Psoas muscle (tissue), 8 donors: ENCODE measurements at regions of chr4 and their contacts with region 1.

Region 1: DNA sequence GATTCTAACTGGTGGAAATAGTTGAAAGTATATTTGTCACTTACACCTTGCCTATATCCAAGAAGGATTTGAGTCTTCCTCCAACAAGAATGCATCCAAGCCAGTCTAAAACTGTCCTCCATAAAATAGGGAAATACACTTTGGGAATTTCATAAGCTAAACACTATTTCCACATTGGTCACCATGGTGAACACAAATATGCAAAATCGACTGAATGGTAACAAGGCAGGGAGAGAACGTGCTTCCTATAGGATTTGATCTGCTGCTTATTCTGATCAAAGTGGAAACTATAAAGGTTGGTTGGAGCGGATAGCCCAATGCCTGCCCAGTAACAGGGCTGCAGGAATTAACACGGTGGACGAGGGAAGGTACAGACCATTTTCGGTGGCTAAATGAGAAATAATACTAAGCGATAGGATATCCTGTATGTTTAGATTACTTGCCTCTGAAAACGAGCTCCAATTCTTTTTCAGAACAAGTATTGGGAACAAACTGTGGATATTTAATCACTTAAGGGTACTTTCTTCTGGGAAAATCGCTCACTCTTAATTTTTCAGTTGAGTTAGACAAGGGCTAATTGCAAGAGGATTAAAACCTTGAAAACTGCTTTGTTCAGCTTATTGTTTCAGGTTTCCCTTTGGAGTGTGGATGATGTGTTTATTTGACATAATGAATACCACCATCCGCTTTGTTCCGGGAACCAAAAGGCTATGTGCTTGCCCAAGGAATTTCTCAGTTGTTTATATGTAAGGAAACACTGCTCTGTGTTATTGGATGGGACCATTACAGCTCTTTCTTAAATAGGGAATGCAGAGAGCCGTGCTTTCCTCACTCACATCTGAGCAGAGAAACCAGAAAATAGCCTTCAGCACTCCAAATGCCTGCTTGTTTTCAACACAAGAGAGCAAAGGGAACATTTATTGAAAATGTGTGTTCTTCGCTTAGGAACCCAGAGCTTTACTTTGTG is 194.4 kb downstream of the CBR4 start:
- DNase-seq: no peak
- ATAC-seq: peak in 3 of 4 donors; percentile 29 to 34 (median 31)
- H3K4me3 ChIP-seq: peak overlapping the region; percentile 24
- H3K27ac ChIP-seq: peak overlapping the region; percentile 68
- H3K4me1 ChIP-seq: peaks cover 41% of the 10 kb centered on the region
- H3K27me3 ChIP-seq: no peaks in the 10 kb centered on the region
- CTCF ChIP-seq: no peak

Region 2: GRCh38 chr4:168831919-168832762 is 16.5 kb after region 1 on chr4:
- intact Hi-C with region 1: loop called in 1 of 2 experiments (anchors 2 kb)
- DNase-seq: peak; percentile 83 to 88
- ATAC-seq: peak; percentile 92 to 96 (median 94)
- H3K4me3 ChIP-seq: peak overlapping the region; percentile 73
- H3K27ac ChIP-seq: peak overlapping the region; percentile 76
- H3K4me1 ChIP-seq: peaks cover 32% of the 10 kb centered on the region
- H3K27me3 ChIP-seq: no peaks in the 10 kb centered on the region
- CTCF ChIP-seq: no peak

Region 3: GRCh38 chr4:169143335-169143734 is 327.7 kb after region 1 on chr4:
- intact Hi-C with region 1: no loop called
- DNase-seq: no peak
- ATAC-seq: no peak
- H3K4me3 ChIP-seq: no peak overlapping the region
- H3K27ac ChIP-seq: no peak overlapping the region
- H3K4me1 ChIP-seq: peaks cover 3% of the 10 kb centered on the region
- H3K27me3 ChIP-seq: no peaks in the 10 kb centered on the region
- CTCF ChIP-seq: no peak